ENCODE measurements at regions of chr1 and their contacts with region 1.

Region 1: GRCh38 chr1:224329842-224330753 is at the start of gene NVL:
- DNase-seq: peak; percentile 88
- H3K4me3 Mint-ChIP-seq: peak within 1 kb of the TSS; percentile 94
- H3K27ac Mint-ChIP-seq: peak within 1 kb of the TSS; percentile 97
- H3K4me1 Mint-ChIP-seq: peaks cover 42% of the 10 kb centered on the region
- H3K27me3 Mint-ChIP-seq: no peaks in the 10 kb centered on the region
- total RNA-seq, gene NVL: 32.5 to 38.0 TPM

Region 2: DNA sequence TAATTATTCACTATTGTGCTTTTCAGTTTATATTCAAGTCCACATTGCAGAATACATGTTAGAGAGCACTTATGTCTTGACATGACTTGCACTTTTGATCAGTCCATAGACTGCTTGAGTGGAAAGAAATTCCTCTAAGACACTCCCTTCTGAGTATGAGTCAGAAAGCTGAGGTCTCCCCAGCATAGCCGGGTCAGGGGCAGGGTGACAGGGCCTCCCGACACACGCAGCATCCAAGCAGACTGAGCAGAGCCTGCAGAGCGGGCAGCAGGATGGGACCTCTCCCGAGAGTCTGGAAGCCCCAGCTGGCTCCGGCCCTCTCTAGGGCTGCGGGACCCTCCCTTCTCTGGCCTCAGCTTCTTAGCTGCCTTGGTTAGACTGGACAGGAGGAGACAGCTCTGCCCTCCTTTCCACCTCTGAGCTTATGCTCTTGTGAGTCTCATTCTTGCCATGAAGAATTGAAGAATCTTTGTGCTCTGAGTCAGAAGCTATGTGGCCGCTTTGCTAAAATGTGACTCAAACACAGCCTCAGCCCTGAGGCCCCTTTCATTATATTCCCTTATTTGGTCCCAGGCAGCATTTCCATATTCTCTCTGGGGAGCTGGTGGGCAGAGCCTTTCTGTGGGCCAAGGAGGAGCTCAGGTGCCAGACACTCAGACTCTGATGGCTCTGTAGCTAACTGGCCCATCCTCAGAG is 629.0 kb before region 1 on chr1:
- CTCF ChIA-PET with region 1: no interaction called
- POLR2A ChIA-PET with region 1: no interaction called
- intact Hi-C with region 1: loop called (anchors 2 kb)
- DNase-seq: peak; percentile 52
- H3K4me3 Mint-ChIP-seq: no peak overlapping the region
- H3K27ac Mint-ChIP-seq: peak overlapping the region; percentile 65
- H3K4me1 Mint-ChIP-seq: peaks cover 35% of the 10 kb centered on the region
- H3K27me3 Mint-ChIP-seq: peaks cover 4% of the 10 kb centered on the region

Region 3: GRCh38 chr1:224113918-224114786 is 215.9 kb before region 1 on chr1 and contains the start of gene FBXO28:
- CTCF ChIA-PET with region 1: interaction called, 22 read pairs
- POLR2A ChIA-PET with region 1: interaction called, 3 read pairs
- intact Hi-C with region 1: loop called (anchors 1 kb)
- DNase-seq: peak; percentile 97
- H3K4me3 Mint-ChIP-seq: peak within 1 kb of the TSS; percentile 78
- H3K27ac Mint-ChIP-seq: peak within 1 kb of the TSS; percentile 86
- H3K4me1 Mint-ChIP-seq: peaks cover 27% of the 10 kb centered on the region
- H3K27me3 Mint-ChIP-seq: no peaks in the 10 kb centered on the region
- total RNA-seq, gene FBXO28: 19.5 to 20.0 TPM

Region 4: DNA sequence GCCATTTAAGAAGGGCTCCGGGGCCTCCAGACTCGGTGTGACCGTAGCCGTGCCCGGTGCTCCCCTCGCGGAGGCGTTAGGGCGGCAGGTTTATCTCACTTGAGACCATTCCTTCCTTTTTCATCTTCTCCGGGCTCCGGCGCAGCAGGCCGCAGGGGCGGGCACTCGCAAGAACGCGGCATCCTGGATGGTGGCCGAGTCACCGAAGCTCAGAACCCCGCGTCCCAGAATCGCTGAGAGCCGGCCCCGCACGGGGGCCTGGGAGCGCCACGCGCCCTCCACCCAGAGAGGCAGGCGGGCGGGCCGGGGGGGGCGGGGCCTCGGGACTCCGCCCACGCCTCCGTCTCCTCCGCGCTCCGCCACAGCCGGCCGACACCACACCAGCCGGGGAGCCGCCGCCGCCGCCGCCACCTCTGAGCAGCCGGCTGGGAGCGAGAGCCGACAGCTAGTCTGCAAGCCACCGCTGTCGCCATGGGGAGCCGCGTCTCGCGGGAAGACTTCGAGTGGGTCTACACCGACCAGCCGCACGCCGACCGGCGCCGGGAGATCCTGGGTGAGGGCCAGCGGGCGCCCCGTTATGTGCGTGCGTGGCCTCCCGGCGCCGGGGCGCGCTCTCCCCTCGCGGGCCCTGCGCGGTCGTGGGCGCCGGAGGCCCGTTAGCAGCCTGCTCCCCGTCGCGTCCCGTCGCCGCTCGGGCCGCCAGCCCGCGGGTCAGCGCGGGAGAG is 147.1 kb before region 1 on chr1 and contains the start of gene DEGS1:
- CTCF ChIA-PET with region 1: interaction called, 4 read pairs
- POLR2A ChIA-PET with region 1: no interaction called
- intact Hi-C with region 1: loop called (anchors 2 kb)
- DNase-seq: peak; percentile 86
- H3K4me3 Mint-ChIP-seq: peak within 1 kb of the TSS; percentile 81
- H3K27ac Mint-ChIP-seq: peak within 1 kb of the TSS; percentile 90
- H3K4me1 Mint-ChIP-seq: peaks cover 45% of the 10 kb centered on the region
- H3K27me3 Mint-ChIP-seq: no peaks in the 10 kb centered on the region
- total RNA-seq, gene DEGS1: 27.9 to 28.4 TPM

Region 5: DNA sequence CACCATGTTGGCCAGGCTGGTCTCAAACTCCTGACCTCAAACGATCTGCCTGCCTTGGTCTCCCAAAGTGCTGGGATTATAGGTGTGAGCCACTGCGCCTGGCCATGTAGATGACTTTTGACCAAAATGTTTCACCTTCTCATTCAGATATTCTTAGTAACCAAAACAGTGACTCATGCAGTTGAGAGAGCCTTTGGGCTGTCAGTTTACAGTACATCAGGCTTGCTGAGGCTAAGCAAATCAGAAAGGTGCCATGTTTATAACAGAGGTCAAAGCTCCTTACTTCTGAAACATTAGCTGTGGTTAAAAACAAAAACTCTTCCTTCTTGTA is 47.5 kb after region 1 on chr1:
- CTCF ChIA-PET with region 1: interaction called, 3 read pairs
- POLR2A ChIA-PET with region 1: interaction called, 3 read pairs
- intact Hi-C with region 1: loop called (anchors 10 kb)
- DNase-seq: peak; percentile 67
- H3K4me3 Mint-ChIP-seq: no peak overlapping the region
- H3K27ac Mint-ChIP-seq: peak overlapping the region; percentile 46
- H3K4me1 Mint-ChIP-seq: peaks cover 91% of the 10 kb centered on the region
- H3K27me3 Mint-ChIP-seq: no peaks in the 10 kb centered on the region

Region 6: GRCh38 chr1:224411766-224412165 is 81.7 kb after region 1 on chr1:
- CTCF ChIA-PET with region 1: no interaction called
- POLR2A ChIA-PET with region 1: no interaction called
- intact Hi-C with region 1: no loop called
- DNase-seq: peak; percentile 16
- H3K4me3 Mint-ChIP-seq: no peak overlapping the region
- H3K27ac Mint-ChIP-seq: peak overlapping the region; percentile 33
- H3K4me1 Mint-ChIP-seq: peaks cover 26% of the 10 kb centered on the region
- H3K27me3 Mint-ChIP-seq: no peaks in the 10 kb centered on the region